B cell (primary cell): ENCODE measurements at regions of chr11 and their contacts with region 1.

Region 1: DNA sequence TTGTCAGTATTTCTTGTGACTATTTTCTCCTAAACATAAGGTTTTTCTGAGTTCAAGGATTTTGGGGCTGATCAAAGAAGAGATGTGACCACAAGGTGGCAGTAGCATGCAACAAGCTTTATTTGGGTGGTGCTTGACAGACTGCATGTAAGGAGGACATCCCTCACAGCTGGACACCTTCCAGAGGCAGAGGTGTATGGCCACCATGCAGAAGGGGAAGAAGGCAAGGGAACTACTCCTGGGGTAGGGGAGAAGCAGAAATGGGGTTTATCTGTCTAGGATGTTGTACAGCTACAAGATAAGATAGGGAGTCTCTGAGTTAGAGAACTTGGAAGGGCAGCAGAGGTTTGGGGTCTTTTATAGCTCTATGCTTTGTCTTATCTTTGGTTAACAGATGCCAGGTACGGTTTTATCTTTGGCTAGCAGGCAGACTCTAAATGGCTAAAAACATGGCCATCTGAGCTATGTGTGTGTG is 5.1 kb upstream of the BIRC2 start:
- DNase-seq: peak; percentile 84
- ATAC-seq: peak; percentile 48
- H3K4me3 ChIP-seq: no peak overlapping the region
- H3K4me3 Mint-ChIP-seq: no peak overlapping the region
- H3K27ac ChIP-seq: peak overlapping the region; percentile 19 to 75
- H3K27ac Mint-ChIP-seq: peak overlapping the region; percentile 43
- H3K4me1 ChIP-seq: peaks cover 14 to 16% of the 10 kb centered on the region in 2 donors
- H3K4me1 Mint-ChIP-seq: peaks cover 42% of the 10 kb centered on the region
- H3K27me3 ChIP-seq: no peaks in the 10 kb centered on the region
- H3K27me3 Mint-ChIP-seq: no peaks in the 10 kb centered on the region
- CTCF ChIP-seq: peak; percentile 80

Region 2: GRCh38 chr11:102205805-102206204 is 136.1 kb before region 1 on chr11:
- CTCF ChIA-PET with region 1: no interaction called
- POLR2A ChIA-PET with region 1: no interaction called
- intact Hi-C with region 1: no loop called
- DNase-seq: no peak
- ATAC-seq: no peak
- H3K4me3 ChIP-seq: no peak overlapping the region
- H3K4me3 Mint-ChIP-seq: no peak overlapping the region
- H3K27ac ChIP-seq: no peak overlapping the region
- H3K27ac Mint-ChIP-seq: no peak overlapping the region
- H3K4me1 ChIP-seq: no peaks in the 10 kb centered on the region
- H3K4me1 Mint-ChIP-seq: no peaks in the 10 kb centered on the region
- H3K27me3 ChIP-seq: peaks cover 0 to 3% (median 0%) of the 10 kb centered on the region in 4 experiments
- H3K27me3 Mint-ChIP-seq: peaks cover 29% of the 10 kb centered on the region
- CTCF ChIP-seq: no peak

Region 3: GRCh38 chr11:102268329-102269193 is 73.3 kb before region 1 on chr11:
- CTCF ChIA-PET with region 1: interaction called, 13 read pairs
- POLR2A ChIA-PET with region 1: no interaction called
- intact Hi-C with region 1: no loop called
- DNase-seq: peak; percentile 85
- ATAC-seq: peak; percentile 99
- H3K4me3 ChIP-seq: peak overlapping the region in 4 of 5 experiments; percentile 1 to 62 (median 36)
- H3K4me3 Mint-ChIP-seq: peak overlapping the region; percentile 78
- H3K27ac ChIP-seq: no peak overlapping the region
- H3K27ac Mint-ChIP-seq: peak overlapping the region; percentile 12
- H3K4me1 ChIP-seq: peaks cover 13 to 17% of the 10 kb centered on the region in 2 donors
- H3K4me1 Mint-ChIP-seq: peaks cover 23% of the 10 kb centered on the region
- H3K27me3 ChIP-seq: peaks cover 0 to 17% (median 11%) of the 10 kb centered on the region in 4 experiments
- H3K27me3 Mint-ChIP-seq: peaks cover 22% of the 10 kb centered on the region
- CTCF ChIP-seq: peak; percentile 31

Region 4: DNA sequence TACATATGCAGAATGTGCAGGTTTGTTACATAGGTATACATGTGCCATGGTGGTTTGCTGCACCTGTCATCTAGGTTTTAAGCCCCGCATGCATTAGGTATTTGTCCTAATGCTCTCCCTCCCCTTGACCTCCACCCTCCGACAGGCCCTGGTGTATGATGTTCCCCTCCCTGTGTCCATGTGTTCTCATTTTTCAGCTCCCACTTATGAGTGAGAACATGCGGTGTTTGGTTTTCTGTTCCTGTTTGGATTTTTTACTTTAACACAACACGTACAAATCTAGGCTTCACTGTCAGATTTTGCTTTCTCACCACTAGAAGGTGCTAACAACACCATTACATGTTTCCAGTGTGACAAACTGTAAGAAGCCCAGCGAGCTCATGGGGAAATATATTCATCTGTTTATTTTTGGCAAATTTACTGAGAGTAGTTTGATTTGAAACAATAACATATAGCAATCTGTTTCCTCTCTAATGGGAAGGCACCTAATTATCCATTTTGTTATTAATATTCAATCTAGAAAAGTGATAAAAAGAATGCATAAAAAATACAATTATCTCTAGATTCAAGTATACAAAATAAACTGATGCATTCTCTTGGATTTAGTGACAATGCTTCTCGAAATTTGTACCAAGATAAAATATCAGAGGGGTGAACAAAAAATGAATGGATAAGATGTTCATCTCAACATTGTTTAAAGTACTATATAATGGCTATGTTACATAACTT is 47.8 kb before region 1 on chr11:
- CTCF ChIA-PET with region 1: interaction called, 295 read pairs
- POLR2A ChIA-PET with region 1: interaction called, 4 read pairs
- intact Hi-C with region 1: loop called (anchors 1 kb)
- DNase-seq: peak; percentile 84
- ATAC-seq: peak; percentile 88
- H3K4me3 ChIP-seq: peak overlapping the region in 4 of 5 experiments; percentile 9 to 48 (median 29)
- H3K4me3 Mint-ChIP-seq: peak overlapping the region; percentile 98
- H3K27ac ChIP-seq: peak overlapping the region; percentile 45 to 73
- H3K27ac Mint-ChIP-seq: peak overlapping the region; percentile 99
- H3K4me1 ChIP-seq: peaks cover 33 to 41% of the 10 kb centered on the region in 2 donors
- H3K4me1 Mint-ChIP-seq: peaks cover 77% of the 10 kb centered on the region
- H3K27me3 ChIP-seq: no peaks in the 10 kb centered on the region
- H3K27me3 Mint-ChIP-seq: no peaks in the 10 kb centered on the region
- CTCF ChIP-seq: peak; percentile 83

Region 5: GRCh38 chr11:102323542-102324251 is 18.2 kb before region 1 on chr11:
- CTCF ChIA-PET with region 1: interaction called, 68 read pairs
- POLR2A ChIA-PET with region 1: interaction called, 6 read pairs
- intact Hi-C with region 1: loop called (anchors 2 kb)
- DNase-seq: no peak
- ATAC-seq: no peak
- H3K4me3 ChIP-seq: peak overlapping the region in 1 of 5 experiments; percentile 9
- H3K4me3 Mint-ChIP-seq: peak overlapping the region; percentile 32
- H3K27ac ChIP-seq: peak overlapping the region in 1 of 2 donors; percentile 98
- H3K27ac Mint-ChIP-seq: peak overlapping the region; percentile 65
- H3K4me1 ChIP-seq: peaks cover 38 to 50% of the 10 kb centered on the region in 2 donors
- H3K4me1 Mint-ChIP-seq: peaks cover 52% of the 10 kb centered on the region
- H3K27me3 ChIP-seq: no peaks in the 10 kb centered on the region
- H3K27me3 Mint-ChIP-seq: no peaks in the 10 kb centered on the region
- CTCF ChIP-seq: no peak

Region 6: GRCh38 chr11:102495161-102496042 is 153.5 kb after region 1 on chr11:
- CTCF ChIA-PET with region 1: interaction called, 28 read pairs
- POLR2A ChIA-PET with region 1: interaction called, 4 read pairs
- intact Hi-C with region 1: loop called (anchors 1 kb)
- DNase-seq: peak; percentile 86
- ATAC-seq: peak; percentile 73
- H3K4me3 ChIP-seq: no peak overlapping the region
- H3K4me3 Mint-ChIP-seq: peak overlapping the region; percentile 55
- H3K27ac ChIP-seq: no peak overlapping the region
- H3K27ac Mint-ChIP-seq: peak overlapping the region; percentile 50
- H3K4me1 ChIP-seq: peaks cover 0 to 7% of the 10 kb centered on the region in 2 donors
- H3K4me1 Mint-ChIP-seq: peaks cover 14% of the 10 kb centered on the region
- H3K27me3 ChIP-seq: no peaks in the 10 kb centered on the region
- H3K27me3 Mint-ChIP-seq: no peaks in the 10 kb centered on the region
- CTCF ChIP-seq: peak; percentile 81